MCF 10A (cell line): ENCODE measurements at regions of chr14 and their contacts with region 1.

Region 1: DNA sequence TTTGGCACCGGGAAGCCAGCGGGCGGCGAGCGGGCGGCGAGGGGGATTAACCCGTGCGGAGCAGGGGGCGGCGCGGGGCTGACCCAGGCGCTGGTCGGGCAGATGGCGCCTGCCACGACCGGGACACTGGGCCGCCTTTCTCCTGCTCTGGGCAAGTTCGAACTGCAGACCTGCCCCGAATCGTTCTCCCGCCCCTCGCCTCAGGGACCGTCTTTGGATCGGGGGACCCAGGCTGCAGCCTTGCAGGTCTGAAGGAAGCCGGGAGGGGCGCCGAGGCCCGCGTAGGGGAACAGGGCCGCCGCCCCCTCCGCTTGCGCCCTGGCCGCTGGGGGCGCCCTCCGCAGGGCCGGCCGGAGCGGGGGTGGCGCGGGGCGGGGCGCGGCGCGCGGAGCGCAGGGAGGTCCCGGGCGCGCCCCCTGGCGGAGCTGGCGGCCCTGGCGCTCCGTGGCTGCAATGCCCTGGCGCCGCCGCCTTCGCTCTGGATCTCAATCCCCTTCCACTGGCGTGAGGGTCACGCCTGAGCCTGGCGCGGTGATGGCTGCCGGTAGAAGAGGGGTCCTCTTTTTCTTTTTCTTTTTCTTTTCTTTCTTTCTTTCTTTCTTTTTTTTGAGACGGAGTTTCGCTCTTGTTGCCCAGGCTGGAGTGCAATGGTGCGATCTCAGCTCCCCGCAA is 449 bp upstream of the LTBP2 start:
- DNase-seq: peak; percentile 72
- H3K4me3 Mint-ChIP-seq: peak overlapping the region; percentile 69
- H3K27ac Mint-ChIP-seq: no peak overlapping the region
- H3K4me1 Mint-ChIP-seq: peaks cover 45% of the 10 kb centered on the region
- H3K27me3 Mint-ChIP-seq: no peaks in the 10 kb centered on the region
- CTCF ChIP-seq: peak; percentile 58

Region 2: GRCh38 chr14:74362361-74362915 is 250.0 kb before region 1 on chr14:
- CTCF ChIA-PET with region 1: interaction called, 4 read pairs
- POLR2A ChIA-PET with region 1: no interaction called
- intact Hi-C with region 1: loop called (anchors 10 kb)
- DNase-seq: peak; percentile 84
- H3K4me3 Mint-ChIP-seq: no peak overlapping the region
- H3K27ac Mint-ChIP-seq: no peak overlapping the region
- H3K4me1 Mint-ChIP-seq: no peaks in the 10 kb centered on the region
- H3K27me3 Mint-ChIP-seq: peaks cover 23% of the 10 kb centered on the region
- CTCF ChIP-seq: peak; percentile 82

Region 3: DNA sequence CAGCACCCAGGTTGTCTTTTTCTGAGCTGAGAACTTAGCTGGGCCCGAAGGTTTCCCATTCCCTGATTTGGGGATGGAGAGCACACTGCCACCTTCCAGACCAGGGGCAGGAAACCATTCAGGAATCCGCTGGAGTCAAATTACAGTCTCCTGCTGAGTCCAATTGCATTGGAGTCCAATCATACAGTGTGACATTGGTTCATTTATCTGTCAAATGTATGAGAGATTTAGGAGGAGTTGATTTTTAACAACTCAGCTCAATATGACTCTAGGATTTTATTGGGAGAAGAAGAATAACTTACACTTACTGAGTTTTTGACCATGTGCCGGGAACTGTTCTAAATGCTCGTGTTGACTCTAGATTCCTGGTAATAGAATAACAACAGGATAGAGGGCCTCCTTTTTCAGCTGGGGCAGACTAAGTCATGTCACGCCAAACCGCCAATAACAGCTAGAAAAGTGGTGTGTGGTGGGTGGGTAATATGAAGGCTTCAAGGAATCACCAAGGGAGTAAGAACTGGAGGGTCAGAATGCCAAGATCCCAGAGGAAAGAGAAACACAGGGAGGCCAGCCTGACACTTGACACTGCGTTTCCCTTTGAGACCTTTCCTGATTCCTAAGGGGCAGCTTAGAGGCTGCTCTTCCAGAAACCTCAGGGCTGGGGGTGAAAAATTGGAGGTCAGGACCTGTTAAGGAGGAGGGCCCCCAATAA is 197.9 kb before region 1 on chr14:
- CTCF ChIA-PET with region 1: no interaction called
- POLR2A ChIA-PET with region 1: no interaction called
- intact Hi-C with region 1: no loop called
- DNase-seq: peak; percentile 25
- H3K4me3 Mint-ChIP-seq: no peak overlapping the region
- H3K27ac Mint-ChIP-seq: no peak overlapping the region
- H3K4me1 Mint-ChIP-seq: no peaks in the 10 kb centered on the region
- H3K27me3 Mint-ChIP-seq: peaks cover 47% of the 10 kb centered on the region
- CTCF ChIP-seq: no peak

Region 4: GRCh38 chr14:74549588-74549987 is 62.9 kb before region 1 on chr14:
- CTCF ChIA-PET with region 1: interaction called, 7 read pairs
- POLR2A ChIA-PET with region 1: no interaction called
- intact Hi-C with region 1: loop called (anchors 2 kb)
- DNase-seq: peak; percentile 51
- H3K4me3 Mint-ChIP-seq: no peak overlapping the region
- H3K27ac Mint-ChIP-seq: peak overlapping the region; percentile 91
- H3K4me1 Mint-ChIP-seq: peaks cover 21% of the 10 kb centered on the region
- H3K27me3 Mint-ChIP-seq: no peaks in the 10 kb centered on the region
- CTCF ChIP-seq: peak; percentile 47

Region 5: DNA sequence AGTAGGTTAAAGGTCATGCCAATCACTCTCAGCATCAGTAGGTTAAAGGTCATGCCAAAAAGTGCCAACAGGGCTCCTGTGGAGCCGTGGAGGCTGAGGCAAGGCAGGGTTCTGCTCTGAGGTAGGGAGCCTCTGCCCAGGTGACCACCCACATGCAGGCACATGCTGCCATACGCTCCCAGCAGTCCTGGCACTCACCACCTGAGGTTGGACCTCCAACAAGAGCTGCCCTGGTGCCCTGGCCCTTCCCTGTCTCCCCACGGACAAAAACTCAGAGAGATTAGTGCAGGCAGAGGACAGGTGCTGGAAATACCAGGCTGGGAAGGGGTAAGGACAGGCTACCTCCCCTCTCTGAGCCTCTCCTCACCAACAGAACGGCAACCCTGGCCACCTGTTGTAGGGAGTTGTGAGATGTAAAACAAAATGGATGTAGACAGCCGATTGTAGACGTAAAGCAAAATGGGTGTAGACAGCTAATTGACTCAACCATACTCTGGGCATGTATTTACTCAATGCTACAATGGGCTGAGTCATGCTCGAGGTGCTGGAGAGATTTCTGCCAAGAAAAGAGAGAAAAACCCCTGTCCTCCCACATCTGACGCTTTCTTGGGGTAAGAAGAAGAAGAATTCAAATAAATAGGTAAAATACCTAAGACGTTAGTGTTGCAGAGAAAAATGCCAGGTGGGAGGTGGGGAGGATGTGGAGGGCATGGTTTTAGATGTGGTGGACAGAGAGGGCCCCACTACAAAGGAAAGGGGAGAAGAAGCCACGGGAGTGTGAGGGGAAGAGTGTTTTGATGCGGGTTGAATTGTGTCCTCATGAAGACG is 32.8 kb before region 1 on chr14:
- CTCF ChIA-PET with region 1: interaction called, 20 read pairs
- POLR2A ChIA-PET with region 1: interaction called, 40 read pairs
- intact Hi-C with region 1: no loop called
- DNase-seq: peak; percentile 89
- H3K4me3 Mint-ChIP-seq: peak overlapping the region; percentile 19
- H3K27ac Mint-ChIP-seq: peak overlapping the region; percentile 88
- H3K4me1 Mint-ChIP-seq: peaks cover 50% of the 10 kb centered on the region
- H3K27me3 Mint-ChIP-seq: no peaks in the 10 kb centered on the region
- CTCF ChIP-seq: no peak

Region 6: DNA sequence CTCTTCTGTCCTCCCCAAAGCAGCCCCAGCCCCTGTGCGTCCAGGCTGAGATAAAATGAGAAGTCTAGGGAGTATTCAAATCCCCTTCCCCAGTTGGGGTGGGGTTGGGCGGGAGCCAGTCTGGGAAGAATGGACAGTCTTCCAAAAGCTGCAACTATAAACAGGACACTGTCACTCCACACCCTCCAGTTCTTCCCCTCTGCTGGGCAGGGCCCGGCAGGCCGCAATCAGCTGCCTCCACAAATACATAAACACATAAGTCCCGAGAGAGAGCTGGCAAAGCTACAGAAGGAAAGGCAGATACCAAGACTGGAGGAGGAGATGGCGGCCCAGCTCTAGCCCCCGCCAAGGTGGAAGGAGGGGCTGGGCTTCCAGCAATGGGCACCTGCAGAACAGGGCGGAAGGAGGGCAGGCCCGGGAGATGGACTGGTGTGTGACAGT is 13.1 kb before region 1 on chr14:
- CTCF ChIA-PET with region 1: interaction called, 11 read pairs
- POLR2A ChIA-PET with region 1: interaction called, 4 read pairs
- intact Hi-C with region 1: no loop called
- DNase-seq: no peak
- H3K4me3 Mint-ChIP-seq: no peak overlapping the region
- H3K27ac Mint-ChIP-seq: peak overlapping the region; percentile 49
- H3K4me1 Mint-ChIP-seq: peaks cover 7% of the 10 kb centered on the region
- H3K27me3 Mint-ChIP-seq: no peaks in the 10 kb centered on the region
- CTCF ChIP-seq: no peak

Region 7: DNA sequence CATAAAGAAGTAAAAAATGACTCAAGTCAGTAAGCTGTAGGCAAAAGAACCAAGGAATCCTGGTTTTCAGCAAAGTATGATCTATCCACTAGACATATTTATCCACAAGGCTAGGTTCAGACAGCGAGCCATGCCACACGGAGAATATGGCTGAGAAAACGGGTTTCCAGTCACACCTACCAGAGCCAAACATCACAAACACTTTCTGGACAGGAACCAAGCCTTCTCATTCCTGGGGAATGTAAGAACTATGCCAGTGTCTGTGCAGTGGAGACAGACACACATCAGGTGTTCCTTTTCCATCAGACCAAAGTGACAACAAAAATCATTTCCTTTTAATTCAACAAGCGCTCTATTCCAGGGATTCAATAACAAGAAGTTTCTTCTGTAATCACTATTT is 59.3 kb after region 1 on chr14:
- CTCF ChIA-PET with region 1: interaction called, 5 read pairs
- POLR2A ChIA-PET with region 1: interaction called, 3 read pairs
- intact Hi-C with region 1: loop called (anchors 5 kb)
- DNase-seq: peak; percentile 84
- H3K4me3 Mint-ChIP-seq: peak overlapping the region; percentile 20
- H3K27ac Mint-ChIP-seq: peak overlapping the region; percentile 11
- H3K4me1 Mint-ChIP-seq: peaks cover 22% of the 10 kb centered on the region
- H3K27me3 Mint-ChIP-seq: no peaks in the 10 kb centered on the region
- CTCF ChIP-seq: no peak

Region 8: DNA sequence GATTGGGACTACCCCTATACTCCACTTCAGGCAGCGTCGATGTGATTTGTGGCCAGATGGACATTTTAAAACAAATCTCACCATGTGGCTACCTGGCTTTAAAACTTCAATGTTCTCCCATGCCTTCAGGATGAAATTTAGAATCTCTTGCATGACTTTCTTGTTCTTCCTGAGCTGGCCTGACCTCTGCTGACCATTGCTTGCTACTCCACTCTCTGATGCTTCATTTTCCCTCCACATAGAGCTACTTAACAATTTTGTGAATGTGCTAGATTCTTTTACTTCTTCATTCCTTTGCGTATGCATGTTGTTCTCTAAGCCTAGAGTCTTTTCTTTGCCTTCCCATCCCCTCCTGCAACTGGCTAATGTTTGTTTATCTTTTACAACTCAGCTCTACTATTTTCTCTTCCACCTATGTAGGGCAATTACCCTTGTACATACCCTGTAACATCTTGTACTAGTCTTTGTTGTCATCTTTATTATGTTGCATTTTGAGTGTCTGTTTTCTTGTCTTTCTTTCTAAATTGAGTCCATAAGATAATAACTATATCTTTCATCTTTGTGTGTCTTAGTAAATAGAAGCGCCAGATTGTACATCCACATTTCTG is 191.8 kb after region 1 on chr14:
- CTCF ChIA-PET with region 1: interaction called, 8 read pairs
- POLR2A ChIA-PET with region 1: interaction called, 3 read pairs
- intact Hi-C with region 1: loop called (anchors 1 kb)
- DNase-seq: peak; percentile 59
- H3K4me3 Mint-ChIP-seq: no peak overlapping the region
- H3K27ac Mint-ChIP-seq: no peak overlapping the region
- H3K4me1 Mint-ChIP-seq: no peaks in the 10 kb centered on the region
- H3K27me3 Mint-ChIP-seq: no peaks in the 10 kb centered on the region
- CTCF ChIP-seq: peak; percentile 75